SK-N-SH (cell line): ENCODE measurements at regions of chr3 and their contacts with region 1.

Region 1: DNA sequence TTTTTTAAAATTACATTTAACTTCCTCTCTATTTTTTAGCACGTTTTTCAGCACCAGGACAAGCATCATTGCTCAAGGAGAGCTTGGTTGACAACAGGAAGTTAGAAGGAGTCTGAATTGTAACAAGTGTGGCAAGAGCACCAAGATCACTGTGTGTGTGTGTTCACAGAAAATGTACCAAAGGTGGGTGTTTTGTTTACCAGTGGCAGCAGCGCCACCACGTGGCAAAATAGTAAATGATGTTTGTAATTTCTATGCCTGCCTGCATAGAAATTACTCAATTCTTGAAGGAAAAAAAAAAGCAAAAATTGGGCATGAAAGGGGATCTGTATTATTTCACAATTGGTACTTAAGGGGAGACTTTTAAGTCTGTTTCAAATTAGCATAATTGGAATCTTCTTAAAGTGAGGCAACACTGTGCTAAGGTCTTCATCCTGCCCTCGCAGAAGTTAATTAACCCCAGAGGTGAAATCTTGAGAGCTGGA is 7.4 kb upstream of the U2SURP start:
- DNase-seq: peak; percentile 69
- H3K4me3 ChIP-seq: no peak overlapping the region
- H3K27ac ChIP-seq: no peak overlapping the region
- H3K4me1 ChIP-seq: peaks cover 0 to 11% of the 10 kb centered on the region in 2 experiments; a peak in 1 of 4 replicates
- H3K27me3 ChIP-seq: no peaks in the 10 kb centered on the region
- CTCF ChIP-seq: peak; percentile 84
- EP300 ChIP-seq: no peak
- RAD21 ChIP-seq: peak; percentile 88

Region 2: DNA sequence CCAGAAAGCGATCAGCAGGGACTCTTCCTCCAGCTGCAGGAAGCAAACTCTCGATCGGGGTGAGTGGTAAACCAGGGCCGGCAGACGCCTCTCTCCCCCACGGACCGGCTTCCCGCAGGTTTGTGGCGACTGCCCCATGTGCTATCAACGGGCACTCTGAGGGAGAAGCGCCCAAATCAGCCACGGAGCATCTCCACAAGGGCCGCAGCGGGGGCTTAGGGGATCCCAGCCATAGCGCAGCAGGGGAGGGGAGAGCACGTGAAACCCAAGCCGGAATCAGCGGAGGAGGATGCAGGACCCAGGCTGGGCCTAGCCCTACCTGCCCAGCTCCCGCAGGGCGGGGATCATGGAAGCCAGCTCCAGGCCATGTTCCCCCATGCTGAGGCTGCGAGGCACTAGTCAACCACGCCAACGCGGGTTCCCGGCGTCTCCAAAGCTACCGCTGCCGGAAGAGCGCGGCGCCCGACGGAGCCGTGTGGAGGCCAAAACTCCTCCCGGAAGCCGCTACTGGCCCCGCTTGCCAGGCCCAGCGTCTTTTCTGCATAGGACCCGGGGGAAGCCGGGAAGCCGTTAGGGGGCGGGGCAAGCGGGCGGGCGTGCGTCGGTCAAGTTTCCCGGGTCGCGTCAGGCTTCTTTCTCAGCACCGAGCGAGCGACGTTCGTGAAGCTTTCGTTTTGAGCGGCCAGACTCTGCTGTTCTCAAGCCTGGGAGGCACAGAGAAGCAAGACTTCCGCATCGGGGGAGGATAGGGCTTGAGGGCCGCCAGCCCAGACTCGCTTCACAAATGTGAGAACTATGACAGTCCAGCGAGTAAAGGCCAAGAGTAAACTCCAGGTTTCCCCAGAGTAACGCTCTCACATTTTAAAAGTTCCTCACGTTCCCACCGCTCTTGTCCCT is 415.4 kb before region 1 on chr3 and contains the start of gene ATR:
- CTCF ChIA-PET with region 1: interaction called, 12 read pairs
- POLR2A ChIA-PET with region 1: no interaction called
- DNase-seq: peak; percentile 94
- H3K4me3 ChIP-seq: peak within 1 kb of the TSS; percentile 91 to 97
- H3K27ac ChIP-seq: peak within 1 kb of the TSS; percentile 92 to 93
- H3K4me1 ChIP-seq: peaks cover 4 to 7% of the 10 kb centered on the region in 2 experiments; a peak in 3 of 4 replicates
- H3K27me3 ChIP-seq: no peaks in the 10 kb centered on the region
- CTCF ChIP-seq: no peak
- EP300 ChIP-seq: peak in 1 of 2 experiments; percentile 62; a peak in 1 of 4 replicates
- RAD21 ChIP-seq: no peak
- polyA plus RNA-seq, gene ATR: 7.3 and 13.2 TPM in 2 replicates

Region 3: DNA sequence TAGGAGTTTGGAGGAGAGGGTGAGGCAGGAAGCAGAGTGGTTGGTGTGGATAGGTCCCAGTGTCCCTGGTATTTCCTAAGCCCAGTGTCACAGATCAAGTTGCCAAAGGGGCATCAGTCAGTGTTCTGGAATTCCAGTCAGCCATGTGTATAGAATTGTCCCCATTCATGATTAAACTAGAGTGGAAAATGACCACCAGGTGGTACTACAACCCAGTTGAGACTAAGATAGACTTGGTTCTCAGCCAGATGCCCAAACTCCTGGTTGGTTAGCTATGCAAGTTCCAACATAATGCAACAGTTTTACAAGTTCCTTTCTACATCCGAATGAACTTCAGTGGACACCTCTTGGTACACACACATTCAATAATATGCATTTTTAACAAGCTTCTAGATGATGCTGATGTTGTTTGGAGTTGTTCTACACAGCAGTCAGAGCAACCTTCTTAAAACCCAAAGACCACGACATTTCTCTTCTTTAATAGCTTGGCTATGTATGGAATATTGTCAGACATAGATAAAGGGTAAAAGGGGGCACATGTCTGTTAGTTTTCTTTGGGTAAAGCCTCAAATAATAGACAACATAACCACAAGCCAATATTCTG is 407.1 kb before region 1 on chr3:
- CTCF ChIA-PET with region 1: interaction called, 12 read pairs
- POLR2A ChIA-PET with region 1: no interaction called
- DNase-seq: peak; percentile 64
- H3K4me3 ChIP-seq: no peak overlapping the region
- H3K27ac ChIP-seq: no peak overlapping the region
- H3K4me1 ChIP-seq: no peaks in the 10 kb centered on the region
- H3K27me3 ChIP-seq: no peaks in the 10 kb centered on the region
- CTCF ChIP-seq: peak; percentile 76
- EP300 ChIP-seq: no peak
- RAD21 ChIP-seq: peak; percentile 89

Region 4: DNA sequence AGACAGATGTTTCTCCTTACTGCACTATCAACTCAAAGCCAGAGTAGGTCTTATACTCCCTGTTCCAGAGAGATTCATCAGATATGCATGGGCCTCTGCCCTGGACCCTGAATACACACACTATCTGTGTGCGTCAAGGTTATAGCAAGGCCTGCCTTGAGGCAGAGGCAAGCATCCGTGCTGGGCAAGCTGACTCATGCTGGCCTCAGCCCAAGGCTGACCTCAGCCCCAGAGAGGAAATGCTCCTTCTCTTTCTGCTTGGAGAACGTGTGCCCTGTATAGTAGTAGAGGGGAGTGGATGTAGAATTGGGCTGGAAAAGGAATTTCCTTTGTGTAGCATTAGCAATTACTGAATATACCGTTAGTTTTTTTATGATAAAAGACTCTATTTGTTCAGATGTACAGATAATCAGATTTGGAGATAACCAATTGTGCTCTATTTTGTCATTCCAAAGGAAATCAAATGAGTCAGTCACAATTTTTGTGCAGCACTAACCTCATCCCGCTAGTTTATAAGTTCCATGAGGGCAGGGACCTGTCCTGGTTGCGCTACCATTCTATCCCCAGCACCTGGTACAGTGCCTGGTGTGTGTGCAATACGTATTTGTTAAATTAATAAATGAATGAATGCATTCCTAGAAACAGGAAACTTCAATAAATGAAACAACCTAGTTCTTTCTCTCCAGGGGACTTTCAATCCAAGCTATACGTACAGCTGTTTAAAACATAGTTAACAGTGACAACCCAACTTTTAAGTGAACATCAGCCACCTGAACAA is 17.2 kb before region 1 on chr3:
- CTCF ChIA-PET with region 1: interaction called, 12 read pairs
- POLR2A ChIA-PET with region 1: no interaction called
- DNase-seq: peak; percentile 66
- H3K4me3 ChIP-seq: no peak overlapping the region
- H3K27ac ChIP-seq: peak overlapping the region; percentile 55 to 74
- H3K4me1 ChIP-seq: peaks cover 3 to 9% of the 10 kb centered on the region in 2 experiments; a peak in 3 of 4 replicates
- H3K27me3 ChIP-seq: no peaks in the 10 kb centered on the region
- CTCF ChIP-seq: no peak
- EP300 ChIP-seq: peak; percentile 25 to 65; a peak in 2 of 4 replicates
- RAD21 ChIP-seq: no peak

Region 5: GRCh38 chr3:143040261-143040879 is 46.4 kb after region 1 on chr3:
- CTCF ChIA-PET with region 1: no interaction called
- POLR2A ChIA-PET with region 1: no interaction called
- DNase-seq: no peak
- H3K4me3 ChIP-seq: no peak overlapping the region; a peak in 1 of 4 replicates
- H3K27ac ChIP-seq: no peak overlapping the region
- H3K4me1 ChIP-seq: no peaks in the 10 kb centered on the region
- H3K27me3 ChIP-seq: no peaks in the 10 kb centered on the region
- CTCF ChIP-seq: peak; percentile 69
- EP300 ChIP-seq: no peak
- RAD21 ChIP-seq: peak; percentile 27; the same call in 1 of the 2 replicates